Gastrocnemius medialis (tissue), 4 donors: ENCODE measurements at regions of chr3 and their contacts with region 1.

Region 1: DNA sequence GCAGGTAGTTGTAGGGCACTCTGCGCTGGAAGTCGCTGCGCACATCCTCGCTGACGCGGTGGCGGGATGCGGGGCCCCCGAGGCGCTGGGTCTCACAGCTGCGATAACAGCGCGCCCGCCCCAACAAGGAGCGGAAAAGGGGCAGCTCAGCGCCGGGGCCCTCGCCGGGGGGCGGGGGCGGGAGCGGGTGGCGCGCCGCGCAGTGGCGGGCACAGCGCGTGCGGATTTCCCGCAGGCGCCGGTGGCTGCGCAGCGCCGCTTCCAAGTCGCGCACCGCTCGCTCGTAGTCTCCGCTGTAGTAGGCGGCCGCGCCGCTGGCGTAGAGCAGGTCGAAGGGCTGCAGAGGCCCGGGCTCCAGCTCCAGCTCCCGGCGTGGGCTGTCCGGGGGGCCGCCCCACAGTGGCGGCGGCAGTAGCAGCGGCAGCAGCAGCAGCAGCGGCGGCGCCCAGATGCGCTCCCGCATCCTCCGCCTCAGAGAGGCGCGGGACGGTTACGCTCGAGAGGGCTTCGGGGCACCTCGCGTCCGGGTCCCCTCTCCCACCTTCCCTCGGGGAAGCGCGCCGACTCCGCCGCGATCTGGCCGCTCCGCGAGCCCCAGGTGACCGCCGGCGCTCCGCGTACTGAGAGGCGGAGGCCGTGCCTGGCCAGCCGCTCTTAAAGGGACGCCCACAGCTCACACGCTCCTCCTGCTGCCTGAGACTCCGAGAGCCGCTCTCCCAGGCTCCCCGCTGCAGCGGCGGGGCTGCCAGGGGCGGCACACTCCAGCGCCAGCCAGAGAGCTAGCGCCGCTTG is at the start of gene P3H2:
- DNase-seq: peak; percentile 36 to 44
- ATAC-seq: peak; percentile 74 to 81
- H3K4me3 ChIP-seq: peak within 1 kb of the TSS; percentile 58 to 89 (median 69)
- H3K27ac ChIP-seq: peak within 1 kb of the TSS in 3 of 4 donors; percentile 3 to 57 (median 41)
- H3K4me1 ChIP-seq: peaks cover 0 to 7% of the 10 kb centered on the region in 2 donors
- H3K27me3 ChIP-seq: no peaks in the 10 kb centered on the region
- CTCF ChIP-seq: peak in 2 of 5 experiments; percentile 26 to 42
- POLR2A ChIP-seq: no peak
- total RNA-seq, gene P3H2: 0.24 to 4.0 (median 0.90) TPM

Region 2: DNA sequence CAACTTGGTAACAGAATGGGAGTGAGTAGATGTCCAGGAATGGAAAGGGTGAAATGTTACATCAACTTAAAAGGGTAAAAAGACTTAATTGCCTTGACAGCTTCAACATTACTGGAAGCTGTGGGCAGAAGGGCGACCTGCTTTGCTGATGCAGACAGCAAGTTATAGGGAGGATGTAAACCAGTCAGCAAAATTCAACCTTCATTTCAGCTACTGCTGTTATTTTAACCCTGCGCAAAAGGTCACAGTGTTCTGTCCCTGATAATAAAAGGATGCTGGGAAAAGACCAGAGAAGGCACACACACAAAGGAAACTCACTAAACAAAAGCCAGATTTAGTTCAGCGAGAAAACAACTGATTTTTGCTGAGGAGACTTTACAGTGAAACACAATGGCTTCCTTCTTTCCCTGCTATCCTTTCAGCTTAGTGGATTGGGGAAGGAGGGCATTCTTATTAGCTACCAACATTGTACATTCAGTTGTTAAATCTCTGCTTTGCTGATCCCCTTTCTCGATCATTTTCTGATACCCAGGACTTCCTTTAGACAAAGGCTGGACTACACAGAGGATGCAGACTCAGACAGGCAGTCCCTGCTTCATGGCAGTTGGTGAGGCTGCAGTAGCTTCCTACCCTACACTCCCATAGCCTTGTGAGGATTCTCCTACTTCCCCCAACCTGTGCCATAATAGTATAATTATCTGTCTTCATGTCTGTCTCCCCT is 61.8 kb before region 1 on chr3:
- in situ Hi-C with region 1: no loop called
- intact Hi-C with region 1: loop called (anchors 5 kb)
- DNase-seq: no peak
- ATAC-seq: no peak
- H3K4me3 ChIP-seq: no peak overlapping the region
- H3K27ac ChIP-seq: no peak overlapping the region
- H3K4me1 ChIP-seq: no peaks in the 10 kb centered on the region
- H3K27me3 ChIP-seq: no peaks in the 10 kb centered on the region
- CTCF ChIP-seq: no peak
- POLR2A ChIP-seq: no peak